ENCODE measurements at regions of chrX and their contacts with region 1.

Region 1: DNA sequence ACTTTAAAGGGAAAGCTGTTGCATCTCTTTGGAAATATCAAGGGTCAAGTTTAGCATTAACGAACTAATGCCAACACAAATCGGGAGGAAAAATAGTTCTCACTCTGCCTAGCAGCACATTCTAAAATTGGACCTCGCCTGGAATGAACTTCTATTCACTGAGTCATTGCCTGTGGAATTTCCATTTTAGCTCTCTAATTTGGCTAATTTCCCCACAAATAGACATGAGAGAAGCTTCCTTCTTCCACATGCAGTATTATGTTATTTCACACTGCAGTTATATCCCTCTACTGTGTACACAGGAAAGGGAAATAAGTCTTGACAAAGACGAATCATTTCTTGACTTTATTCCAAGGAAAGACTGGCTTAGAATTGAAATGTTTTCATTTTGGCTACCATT is 9.3 kb downstream of the ZXDA start:
- DNase-seq: no peak
- H3K4me3 Mint-ChIP-seq: no peak overlapping the region
- H3K27ac Mint-ChIP-seq: no peak overlapping the region
- H3K4me1 Mint-ChIP-seq: peaks cover 14% of the 10 kb centered on the region
- H3K27me3 Mint-ChIP-seq: no peaks in the 10 kb centered on the region

Region 2: DNA sequence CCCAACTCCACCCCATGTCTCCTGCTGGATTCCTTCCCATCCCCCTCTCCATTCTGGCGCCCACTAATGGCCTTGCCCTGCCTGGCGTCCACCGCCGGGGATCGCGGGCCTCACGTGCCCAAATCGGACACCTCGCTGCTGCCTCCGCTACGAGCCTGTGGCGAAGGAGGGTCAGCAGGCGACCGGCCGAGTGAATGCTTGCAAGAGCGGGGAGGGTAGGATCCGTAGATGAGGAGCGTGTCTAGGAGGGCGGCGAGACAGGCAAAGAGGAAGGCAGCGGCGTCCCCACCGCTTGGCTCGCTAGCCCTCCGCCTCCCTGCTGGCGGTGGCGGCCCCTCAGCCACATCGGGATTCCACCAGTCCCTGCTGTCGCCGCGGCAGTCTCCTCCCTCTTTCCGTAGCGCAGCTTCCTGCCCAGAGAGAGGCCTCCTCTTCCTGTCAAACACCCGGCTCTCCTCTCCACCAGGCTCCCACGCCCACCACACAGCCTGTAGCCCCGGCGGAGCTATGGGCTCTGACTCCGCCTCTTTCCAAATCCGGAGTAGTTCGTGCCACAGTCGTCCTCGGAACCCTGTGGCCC is 779.7 kb before region 1 on chrX and contains the start of gene SPIN2B:
- CTCF ChIA-PET with region 1: no interaction called
- POLR2A ChIA-PET with region 1: no interaction called
- intact Hi-C with region 1: loop called (anchors 10 kb)
- DNase-seq: peak; percentile 90
- H3K4me3 Mint-ChIP-seq: peak within 1 kb of the TSS; percentile 84
- H3K27ac Mint-ChIP-seq: peak within 1 kb of the TSS; percentile 86
- H3K4me1 Mint-ChIP-seq: peaks cover 5% of the 10 kb centered on the region
- H3K27me3 Mint-ChIP-seq: no peaks in the 10 kb centered on the region
- total RNA-seq, gene SPIN2B: 5.1 to 7.7 TPM